SK-N-SH (cell line): ENCODE measurements at regions of chr11 and their contacts with region 1.

Region 1: GRCh38 chr11:66579017-66579606 is 10.7 kb upstream of the CTSF start:
- DNase-seq: peak; percentile 90
- H3K4me3 ChIP-seq: no peak overlapping the region
- H3K27ac ChIP-seq: no peak overlapping the region
- H3K4me1 ChIP-seq: peaks cover 0 to 2% of the 10 kb centered on the region in 2 experiments; a peak in 1 of 4 replicates
- H3K27me3 ChIP-seq: no peaks in the 10 kb centered on the region; the same call in 1 of the 2 replicates
- CTCF ChIP-seq: peak; percentile 81
- EP300 ChIP-seq: no peak
- RAD21 ChIP-seq: peak; percentile 77

Region 2: GRCh38 chr11:66568124-66568916 is 10.8 kb before region 1 on chr11 and contains the start of gene CTSF:
- CTCF ChIA-PET with region 1: interaction called, 16 read pairs
- POLR2A ChIA-PET with region 1: no interaction called
- DNase-seq: peak; percentile 100
- H3K4me3 ChIP-seq: peak within 1 kb of the TSS; percentile 58 to 59
- H3K27ac ChIP-seq: peak within 1 kb of the TSS in 1 of 2 experiments; percentile 23; a peak in 1 of 4 replicates
- H3K4me1 ChIP-seq: peaks cover 0 to 7% of the 10 kb centered on the region in 2 experiments; a peak in 1 of 4 replicates
- H3K27me3 ChIP-seq: no peaks in the 10 kb centered on the region
- CTCF ChIP-seq: no peak
- EP300 ChIP-seq: no peak
- RAD21 ChIP-seq: no peak
- polyA plus RNA-seq, gene CTSF: 57.2 and 60.1 TPM in 2 replicates

Region 3: DNA sequence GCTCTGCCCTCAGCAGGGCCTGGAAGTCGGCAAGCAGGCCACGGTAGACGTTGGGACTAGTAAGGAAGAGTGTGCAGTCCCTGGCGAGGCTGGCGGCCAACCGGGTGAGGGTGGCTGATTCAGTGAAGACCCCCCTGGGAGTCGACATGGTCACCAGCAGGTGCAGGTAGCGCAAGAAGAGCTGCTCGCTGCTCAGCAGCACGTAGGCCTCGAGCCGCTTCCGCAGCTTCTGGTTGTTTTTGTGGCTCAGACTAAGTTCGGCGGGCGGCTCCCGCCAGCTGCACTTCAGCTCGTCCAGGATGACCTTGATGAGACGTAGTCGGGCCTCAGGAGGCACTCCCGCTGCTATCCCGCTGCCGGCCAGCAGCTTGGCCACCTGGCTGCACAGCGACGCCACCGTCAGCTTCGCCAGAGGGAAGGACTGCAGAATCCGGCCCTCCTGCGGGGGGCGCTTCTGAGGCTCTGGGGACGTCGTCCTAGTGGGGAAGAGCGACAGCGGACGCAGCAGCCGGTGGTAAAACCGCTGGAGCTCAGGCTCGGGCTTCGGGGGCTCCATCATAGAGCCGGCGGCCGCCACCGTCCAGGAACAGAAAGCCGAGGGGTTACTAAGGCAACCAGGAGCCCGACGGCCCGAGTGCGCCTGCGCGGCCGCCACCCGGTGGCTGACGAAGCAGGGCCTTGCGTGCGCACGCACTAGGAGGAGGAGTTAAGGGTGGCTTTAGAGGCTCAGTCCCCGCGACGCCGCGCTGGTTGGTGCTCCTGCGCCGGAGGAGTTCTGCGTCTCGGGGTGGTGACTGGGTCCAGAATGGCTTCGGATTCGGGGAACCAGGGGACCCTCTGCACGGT is 13.6 kb after region 1 on chr11 and contains the starts of genes CCDC87 and CCS:
- CTCF ChIA-PET with region 1: interaction called, 21 read pairs
- POLR2A ChIA-PET with region 1: no interaction called
- DNase-seq: peak; percentile 100
- H3K4me3 ChIP-seq: peak within 1 kb of the TSS; percentile 77 to 94
- H3K27ac ChIP-seq: peak within 1 kb of the TSS; percentile 62 to 84; a peak in 3 of 4 replicates
- H3K4me1 ChIP-seq: peaks cover 4 to 17% of the 10 kb centered on the region in 2 experiments; a peak in 1 of 4 replicates
- H3K27me3 ChIP-seq: no peaks in the 10 kb centered on the region
- CTCF ChIP-seq: peak; percentile 57
- EP300 ChIP-seq: no peak
- RAD21 ChIP-seq: no peak
- polyA plus RNA-seq, gene CCDC87: 0.06 and 0.21 TPM in 2 replicates
- polyA plus RNA-seq, gene CCS: 54.7 and 56.1 TPM in 2 replicates